A673 (cell line): ENCODE measurements at regions of chr6 and their contacts with region 1.

Region 1: DNA sequence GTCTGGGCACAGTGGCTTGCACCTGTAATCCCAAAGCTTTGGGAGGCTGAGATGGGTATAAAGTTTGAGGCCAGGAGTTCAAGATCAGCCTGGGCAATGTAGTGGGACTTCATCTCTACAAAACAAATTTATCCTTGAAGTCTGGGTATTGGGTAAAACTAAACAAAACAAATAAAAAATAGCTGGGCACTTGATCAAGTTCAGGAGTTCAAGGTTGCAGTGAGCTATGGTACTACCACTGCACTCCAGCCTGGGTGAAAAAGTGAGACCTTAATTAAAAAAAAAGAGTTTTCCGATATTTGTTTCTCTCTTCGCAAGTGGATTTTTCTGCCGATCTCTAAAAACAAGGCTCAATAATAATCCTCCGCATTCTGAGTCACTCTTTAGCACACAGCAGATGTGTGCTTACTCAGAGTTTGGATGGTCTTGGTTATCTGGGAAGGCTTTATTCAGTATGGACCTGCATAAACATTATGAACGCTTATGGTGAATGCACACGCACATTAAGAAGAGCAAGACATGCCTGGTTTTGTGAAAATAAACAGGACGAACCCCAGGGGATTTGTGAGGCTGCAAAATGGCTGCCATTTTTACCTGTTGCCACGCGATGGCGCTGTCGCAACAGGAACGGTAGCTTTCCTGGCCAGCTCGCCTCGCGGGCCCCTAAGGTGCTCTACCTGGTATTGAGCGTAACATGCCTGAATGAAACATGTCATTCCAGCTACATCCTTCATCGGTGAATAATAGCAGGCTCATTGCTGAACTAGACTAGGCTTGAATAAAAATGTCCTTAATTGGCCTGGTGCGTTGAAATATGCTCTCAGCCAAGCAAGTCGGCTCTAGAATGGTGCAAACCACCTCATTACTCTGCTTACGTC is 6.0 kb downstream of the OPN5 start:
- DNase-seq: peak; percentile 61
- H3K4me3 ChIP-seq: no peak overlapping the region
- H3K27ac ChIP-seq: no peak overlapping the region
- H3K4me1 ChIP-seq: no peaks in the 10 kb centered on the region
- H3K27me3 ChIP-seq: peaks cover 28% of the 10 kb centered on the region
- CTCF ChIP-seq: peak; percentile 94

Region 2: GRCh38 chr6:47773005-47773404 is 14.9 kb before region 1 on chr6:
- CTCF ChIA-PET with region 1: no interaction called
- POLR2A ChIA-PET with region 1: no interaction called
- intact Hi-C with region 1: no loop called
- DNase-seq: no peak
- H3K4me3 ChIP-seq: no peak overlapping the region
- H3K27ac ChIP-seq: no peak overlapping the region
- H3K4me1 ChIP-seq: no peaks in the 10 kb centered on the region
- H3K27me3 ChIP-seq: no peaks in the 10 kb centered on the region
- CTCF ChIP-seq: no peak

Region 3: DNA sequence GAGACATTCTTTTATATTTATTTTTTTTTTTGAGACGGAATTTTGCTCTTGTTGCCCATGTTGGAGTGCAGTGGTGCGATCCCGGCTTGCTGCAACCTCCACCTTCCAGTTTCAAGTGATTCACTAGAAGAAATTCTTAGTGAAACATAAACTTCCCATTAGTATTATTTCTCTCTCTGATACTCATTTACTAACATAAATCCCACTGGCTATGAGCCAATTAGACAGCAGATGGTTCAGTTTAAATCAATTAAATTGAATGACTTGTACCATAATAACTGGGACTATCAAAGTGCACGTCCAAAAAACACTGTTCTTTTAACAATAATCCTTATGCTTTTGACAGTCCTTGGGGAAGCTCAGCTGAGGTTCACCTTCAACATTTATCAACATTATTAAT is 434.4 kb after region 1 on chr6:
- CTCF ChIA-PET with region 1: no interaction called
- POLR2A ChIA-PET with region 1: no interaction called
- intact Hi-C with region 1: no loop called
- DNase-seq: no peak
- H3K4me3 ChIP-seq: no peak overlapping the region
- H3K27ac ChIP-seq: no peak overlapping the region
- H3K4me1 ChIP-seq: no peaks in the 10 kb centered on the region
- H3K27me3 ChIP-seq: no peaks in the 10 kb centered on the region
- CTCF ChIP-seq: no peak

Region 4: GRCh38 chr6:49409951-49410542 is 1622.2 kb after region 1 on chr6:
- CTCF ChIA-PET with region 1: interaction called, 9 read pairs
- POLR2A ChIA-PET with region 1: no interaction called
- intact Hi-C with region 1: loop called (anchors 5 kb)
- DNase-seq: peak; percentile 84
- H3K4me3 ChIP-seq: peak overlapping the region; percentile 14
- H3K27ac ChIP-seq: peak overlapping the region; percentile 57
- H3K4me1 ChIP-seq: peaks cover 6% of the 10 kb centered on the region
- H3K27me3 ChIP-seq: no peaks in the 10 kb centered on the region
- CTCF ChIP-seq: peak; percentile 89